Panc1 (cell line): ENCODE measurements at regions of chr7 and their contacts with region 1.

Region 1: GRCh38 chr7:129652914-129653313 is 41.4 kb downstream of the NRF1 start:
- DNase-seq: no peak
- ATAC-seq: no peak
- H3K4me3 ChIP-seq: no peak overlapping the region
- H3K27ac ChIP-seq: no peak overlapping the region
- H3K4me1 ChIP-seq: no peaks in the 10 kb centered on the region
- H3K27me3 ChIP-seq: no peaks in the 10 kb centered on the region
- CTCF ChIP-seq: no peak

Region 2: DNA sequence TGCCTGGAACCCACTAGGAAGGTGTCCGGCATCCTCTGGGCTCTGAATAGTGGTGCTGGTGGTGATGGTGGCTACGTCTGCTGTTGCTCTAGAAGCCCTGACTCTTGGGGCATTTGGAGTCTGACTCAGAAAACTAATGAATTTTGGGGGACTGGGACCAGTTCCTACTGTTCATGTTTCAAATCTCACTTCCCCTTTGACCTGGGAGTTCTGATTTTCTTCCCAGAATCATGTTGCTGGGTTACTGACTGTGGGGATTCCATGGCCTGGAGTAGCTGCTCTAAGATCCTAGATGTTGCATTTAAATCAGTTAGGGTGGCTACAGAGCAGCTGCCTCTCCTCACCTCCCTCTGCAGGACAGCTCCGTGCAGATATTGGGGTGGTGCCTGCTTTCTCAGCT is 505.2 kb before region 1 on chr7:
- CTCF ChIA-PET with region 1: interaction called, 11 read pairs
- POLR2A ChIA-PET with region 1: no interaction called
- in situ Hi-C with region 1: no loop called
- intact Hi-C with region 1: no loop called
- DNase-seq: no peak
- ATAC-seq: no peak
- H3K4me3 ChIP-seq: no peak overlapping the region
- H3K27ac ChIP-seq: no peak overlapping the region
- H3K4me1 ChIP-seq: peaks cover 3% of the 10 kb centered on the region; the same call in 1 of the 2 replicates
- H3K27me3 ChIP-seq: peaks cover 10% of the 10 kb centered on the region
- CTCF ChIP-seq: no peak

Region 3: DNA sequence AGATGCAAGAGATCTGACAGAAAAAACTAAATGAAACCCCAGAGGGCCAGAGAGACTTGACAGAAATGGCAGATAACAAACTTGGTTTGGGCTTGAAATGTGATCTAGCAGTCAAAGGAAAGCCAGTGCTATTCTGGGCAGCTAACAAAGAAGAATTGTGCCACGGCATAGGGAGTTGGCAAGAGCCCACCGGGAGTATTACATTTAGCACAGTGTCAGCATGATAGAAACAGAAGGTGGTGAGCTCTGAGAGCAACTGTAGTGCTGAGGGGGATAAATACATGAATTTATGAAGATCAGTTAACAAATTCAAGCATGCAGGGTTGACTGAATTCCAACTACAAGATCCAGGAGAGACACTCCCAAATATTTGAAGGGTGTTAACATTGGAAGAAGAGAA is 337.0 kb before region 1 on chr7:
- CTCF ChIA-PET with region 1: no interaction called
- POLR2A ChIA-PET with region 1: no interaction called
- in situ Hi-C with region 1: no loop called
- intact Hi-C with region 1: no loop called
- DNase-seq: no peak
- ATAC-seq: no peak
- H3K4me3 ChIP-seq: no peak overlapping the region
- H3K27ac ChIP-seq: no peak overlapping the region
- H3K4me1 ChIP-seq: no peaks in the 10 kb centered on the region
- H3K27me3 ChIP-seq: no peaks in the 10 kb centered on the region
- CTCF ChIP-seq: no peak

Region 4: DNA sequence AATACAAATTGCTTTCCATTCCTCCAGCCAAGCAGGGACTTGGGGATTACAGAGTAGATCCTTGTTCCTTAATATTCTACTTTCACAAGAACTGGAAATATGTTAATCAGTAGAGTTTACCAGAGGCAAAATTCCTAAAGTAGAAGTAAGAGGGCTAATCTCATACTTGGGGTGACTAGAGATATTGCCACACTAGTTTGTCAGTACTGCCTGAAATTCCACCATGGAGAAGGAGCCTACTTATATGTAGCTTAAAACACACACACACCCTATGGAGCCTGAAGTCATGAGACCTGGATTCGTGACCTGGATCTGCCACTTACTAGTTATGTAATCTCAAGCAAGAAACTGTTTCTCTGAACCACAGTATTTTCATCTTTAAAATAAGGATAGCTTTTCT is 184.8 kb before region 1 on chr7:
- CTCF ChIA-PET with region 1: no interaction called
- POLR2A ChIA-PET with region 1: no interaction called
- in situ Hi-C with region 1: no loop called
- intact Hi-C with region 1: no loop called
- DNase-seq: no peak
- ATAC-seq: no peak
- H3K4me3 ChIP-seq: no peak overlapping the region
- H3K27ac ChIP-seq: no peak overlapping the region
- H3K4me1 ChIP-seq: no peaks in the 10 kb centered on the region
- H3K27me3 ChIP-seq: no peaks in the 10 kb centered on the region
- CTCF ChIP-seq: no peak

Region 5: DNA sequence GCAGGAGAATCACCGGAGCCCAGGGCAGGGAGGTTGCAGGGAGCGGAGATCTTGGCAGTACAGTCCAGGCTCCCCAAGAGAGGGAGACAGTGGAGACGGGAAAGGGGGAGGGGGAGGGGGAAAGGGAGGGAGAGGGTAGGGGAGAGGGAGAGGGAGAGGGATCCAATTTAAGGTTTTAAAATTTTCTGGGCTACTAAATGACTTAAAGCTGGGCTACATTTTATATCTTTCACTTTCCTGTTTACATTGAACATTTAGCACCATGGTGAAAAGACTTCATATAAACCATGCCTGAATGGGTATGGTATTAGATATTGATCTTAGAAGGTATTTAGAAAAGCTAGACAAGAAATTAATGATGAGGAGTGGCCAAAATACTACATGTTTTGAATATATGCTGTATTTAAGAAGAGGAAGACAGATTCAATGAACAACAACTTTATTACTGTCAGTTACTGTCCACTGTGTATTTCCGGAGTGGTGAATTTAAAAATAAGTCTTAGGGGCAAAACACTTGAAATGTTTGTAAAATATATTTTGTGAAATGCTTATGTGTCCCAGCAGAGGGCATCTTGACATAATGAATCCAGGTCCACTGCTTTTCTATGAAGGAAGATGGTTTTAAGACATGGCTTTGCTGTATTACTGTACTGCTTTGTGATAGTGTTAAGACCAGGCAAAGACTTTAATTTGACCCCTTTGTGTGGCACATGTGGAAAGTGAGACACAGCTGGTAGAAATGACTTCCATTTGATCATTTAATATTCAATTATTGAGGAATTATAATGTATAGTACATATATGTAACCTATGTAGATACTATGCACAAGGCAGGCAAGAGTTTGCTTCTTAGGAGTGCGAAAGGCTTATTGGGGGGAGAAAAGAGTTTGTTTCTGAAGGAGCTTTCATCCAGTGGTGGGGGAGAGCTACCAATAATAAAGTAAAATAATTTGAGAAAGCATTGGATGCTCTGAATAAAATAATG is 11.4 kb after region 1 on chr7:
- CTCF ChIA-PET with region 1: interaction called, 19 read pairs
- POLR2A ChIA-PET with region 1: no interaction called
- in situ Hi-C with region 1: no loop called
- intact Hi-C with region 1: no loop called
- DNase-seq: peak; percentile 69
- ATAC-seq: peak; percentile 82
- H3K4me3 ChIP-seq: no peak overlapping the region
- H3K27ac ChIP-seq: peak overlapping the region; percentile 13; the same call in 1 of the 2 replicates
- H3K4me1 ChIP-seq: peaks cover 8% of the 10 kb centered on the region
- H3K27me3 ChIP-seq: no peaks in the 10 kb centered on the region
- CTCF ChIP-seq: peak; percentile 67; the same call in 1 of the 2 replicates